ENCODE measurements at regions of chr1 and their contacts with region 1.

Region 1: GRCh38 chr1:185984113-185984836 is 250.1 kb downstream of the HMCN1 start:
- DNase-seq: no peak
- ATAC-seq: peak; percentile 78 to 95 (median 86)
- H3K4me3 ChIP-seq: no peak overlapping the region
- H3K27ac ChIP-seq: peak overlapping the region in 6 of 10 donors; percentile 15 to 68 (median 50)
- H3K4me1 ChIP-seq: peaks cover 0 to 27% (median 11%) of the 10 kb centered on the region in 9 donors
- H3K27me3 ChIP-seq: no peaks in the 10 kb centered on the region
- CTCF ChIP-seq: no peak

Region 2: GRCh38 chr1:185733818-185734771 is 250.2 kb before region 1 on chr1 and contains the start of gene HMCN1:
- intact Hi-C with region 1: loop called in 1 of 10 experiments (anchors 10 kb)
- DNase-seq: peak; percentile 82 to 84
- ATAC-seq: peak; percentile 91 to 98 (median 94)
- H3K4me3 ChIP-seq: peak within 1 kb of the TSS; percentile 27 to 75 (median 62)
- H3K27ac ChIP-seq: peak within 1 kb of the TSS; percentile 12 to 87 (median 79)
- H3K4me1 ChIP-seq: peaks cover 0 to 18% (median 4%) of the 10 kb centered on the region in 9 donors
- H3K27me3 ChIP-seq: peaks cover 0 to 48% (median 0%) of the 10 kb centered on the region in 7 donors
- CTCF ChIP-seq: peak in 7 of 9 donors; percentile 18 to 55 (median 39)
- total RNA-seq, gene HMCN1: 4.6 to 12.4 (median 8.0) TPM

Region 3: DNA sequence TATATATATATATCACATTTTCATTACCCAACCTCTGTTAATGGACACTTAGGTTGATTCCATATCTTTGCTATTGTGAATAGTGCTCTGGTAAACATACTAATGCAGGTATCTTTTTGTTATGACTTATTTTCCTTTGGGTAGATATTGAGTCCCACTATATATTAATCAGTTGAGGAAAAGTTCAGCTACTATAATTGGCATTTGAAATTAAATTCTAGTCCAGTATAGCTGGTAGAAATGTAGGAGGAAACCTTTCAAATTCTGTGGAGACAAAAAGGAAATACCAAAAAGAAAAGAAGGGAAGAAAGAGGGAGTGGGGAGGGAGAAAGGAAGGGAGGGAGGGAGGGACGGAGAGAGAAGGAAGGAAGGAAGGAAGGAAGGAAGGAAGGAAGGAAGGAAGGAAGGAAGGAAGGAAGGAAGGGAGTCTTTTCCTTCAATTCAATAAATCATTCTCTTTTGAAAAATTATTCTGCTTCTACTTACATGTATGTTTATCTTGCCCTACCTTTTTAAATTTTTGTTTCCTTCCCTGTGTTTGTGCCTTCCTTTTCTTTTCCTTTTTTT is 78.9 kb after region 1 on chr1:
- intact Hi-C with region 1: loop called in 1 of 10 experiments (anchors 2 kb)
- DNase-seq: no peak
- ATAC-seq: no peak
- H3K4me3 ChIP-seq: no peak overlapping the region
- H3K27ac ChIP-seq: no peak overlapping the region
- H3K4me1 ChIP-seq: peaks cover 0 to 6% (median 0%) of the 10 kb centered on the region in 9 donors
- H3K27me3 ChIP-seq: no peaks in the 10 kb centered on the region
- CTCF ChIP-seq: no peak